Lower leg skin (tissue), 4 donors: ENCODE measurements at regions of chr9 and their contacts with region 1.

Region 1: DNA sequence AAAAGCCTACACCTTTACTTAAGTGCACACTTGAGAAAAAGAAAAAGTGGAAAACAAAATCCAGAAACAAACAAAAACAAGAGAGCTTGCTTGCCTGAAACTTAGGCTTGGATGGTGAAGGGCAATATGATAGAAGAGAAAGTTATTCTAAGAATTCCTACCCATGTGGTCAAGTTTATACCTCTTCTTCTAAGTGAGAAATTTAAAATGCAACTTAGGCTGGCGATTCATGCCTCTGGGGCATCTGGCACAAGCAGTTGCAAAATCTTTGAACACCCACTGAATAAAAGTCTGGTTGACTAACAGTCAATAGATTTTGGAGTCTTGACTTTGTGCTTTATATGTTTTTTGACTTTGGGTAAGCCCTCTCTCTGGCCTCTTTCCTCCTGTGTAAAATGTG is 239.6 kb downstream of the KDM4C start:
- DNase-seq: no peak
- H3K4me3 ChIP-seq: no peak overlapping the region
- CTCF ChIP-seq: no peak
- POLR2A ChIP-seq: no peak

Region 2: DNA sequence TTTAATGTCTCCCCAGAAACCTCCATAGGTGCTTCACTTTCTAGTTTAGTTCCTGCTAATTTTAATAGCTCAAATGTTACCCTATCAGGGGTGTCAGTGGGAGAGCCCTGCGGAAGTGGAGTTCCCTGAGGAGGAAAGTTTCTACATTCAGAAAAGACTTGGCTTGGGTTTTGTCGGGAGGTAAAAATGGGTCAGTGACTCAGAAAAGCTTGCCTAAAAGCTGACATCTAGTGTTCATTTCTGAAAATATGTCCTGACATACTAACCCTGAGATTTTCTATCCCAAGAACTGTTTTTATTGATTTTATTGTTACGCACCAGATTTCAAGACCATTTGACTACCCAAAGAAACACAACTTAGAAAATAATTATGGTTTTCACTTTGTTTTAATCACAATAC is 310.9 kb before region 1 on chr9:
- intact Hi-C with region 1: no loop called
- DNase-seq: no peak
- H3K4me3 ChIP-seq: no peak overlapping the region
- CTCF ChIP-seq: no peak
- POLR2A ChIP-seq: no peak

Region 3: GRCh38 chr9:6945816-6946215 is 51.5 kb before region 1 on chr9:
- intact Hi-C with region 1: loop called (anchors 2 kb)
- DNase-seq: no peak
- H3K4me3 ChIP-seq: no peak overlapping the region
- CTCF ChIP-seq: no peak
- POLR2A ChIP-seq: no peak